Calu3 (cell line): ENCODE measurements at regions of chr2 and their contacts with region 1.

Region 1: GRCh38 chr2:159960383-159960782 is 102.0 kb downstream of the PLA2R1 start:
- DNase-seq: peak; percentile 30
- H3K4me3 Mint-ChIP-seq: peak overlapping the region; percentile 10
- H3K27ac Mint-ChIP-seq: peak overlapping the region; percentile 74
- H3K4me1 Mint-ChIP-seq: peaks cover 26% of the 10 kb centered on the region
- H3K27me3 Mint-ChIP-seq: no peaks in the 10 kb centered on the region
- CTCF ChIP-seq: no peak

Region 2: GRCh38 chr2:159880729-159881128 is 79.7 kb before region 1 on chr2:
- CTCF ChIA-PET with region 1: no interaction called
- intact Hi-C with region 1: loop called (anchors 1 kb)
- DNase-seq: no peak
- H3K4me3 Mint-ChIP-seq: no peak overlapping the region
- H3K27ac Mint-ChIP-seq: no peak overlapping the region
- H3K4me1 Mint-ChIP-seq: no peaks in the 10 kb centered on the region
- H3K27me3 Mint-ChIP-seq: no peaks in the 10 kb centered on the region
- CTCF ChIP-seq: no peak